B cell (primary cell): ENCODE measurements at regions of chr3 and their contacts with region 1.

Region 1: DNA sequence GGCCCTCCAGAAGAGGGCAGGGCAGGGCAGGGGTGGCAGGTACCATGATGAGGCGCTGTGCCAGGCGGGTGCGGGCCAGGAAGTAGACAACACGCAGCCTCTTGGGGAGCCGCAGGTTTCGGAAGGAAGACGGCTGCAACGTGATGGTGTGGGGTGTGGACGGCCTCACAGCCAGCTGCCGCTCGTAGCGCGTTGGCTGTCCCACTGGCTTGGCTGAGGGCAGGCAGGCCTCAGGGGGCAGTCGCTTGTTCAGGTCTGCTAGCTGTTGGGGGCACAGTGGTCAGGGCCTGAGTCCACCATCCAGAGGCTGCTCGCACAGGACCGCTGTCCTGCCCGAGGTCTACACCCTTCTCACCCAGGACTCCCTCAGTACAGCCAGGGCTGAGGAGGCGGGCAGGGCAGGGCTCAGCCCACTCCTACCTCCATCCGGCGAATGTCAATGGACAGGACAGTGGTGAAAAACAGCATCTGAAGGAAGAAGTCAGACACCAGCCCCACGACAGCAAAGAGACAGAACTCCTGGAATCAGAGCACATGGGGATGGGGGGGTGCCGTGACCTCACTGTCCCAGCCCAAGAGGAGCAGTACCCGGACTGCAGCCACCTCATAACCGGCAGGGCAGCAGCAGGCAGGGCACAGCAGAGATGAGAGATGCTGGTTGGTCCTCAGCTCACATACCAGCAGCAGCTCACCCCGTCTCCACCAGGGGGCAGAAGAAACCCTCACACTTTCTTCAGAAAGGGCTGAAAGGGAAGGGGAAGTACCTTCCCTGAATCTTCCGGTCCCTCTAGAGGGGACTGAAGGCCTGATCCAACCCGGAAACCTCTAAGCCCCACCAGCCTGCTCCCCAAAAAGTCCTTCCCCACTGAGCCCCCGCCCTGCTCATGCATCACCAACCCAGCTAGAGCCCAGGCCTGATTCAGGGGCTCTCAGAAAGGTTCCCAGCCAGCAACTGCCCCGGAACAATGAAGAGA is 40.0 kb downstream of the PTPN23 start:
- DNase-seq: peak; percentile 92
- ATAC-seq: peak; percentile 98
- H3K4me3 ChIP-seq: peak overlapping the region in 2 of 5 experiments; percentile 8 to 9
- H3K4me3 Mint-ChIP-seq: peak overlapping the region; percentile 76
- H3K27ac ChIP-seq: peak overlapping the region; percentile 77 to 87
- H3K27ac Mint-ChIP-seq: peak overlapping the region; percentile 99
- H3K4me1 ChIP-seq: peaks cover 11 to 12% of the 10 kb centered on the region in 2 donors
- H3K4me1 Mint-ChIP-seq: peaks cover 14% of the 10 kb centered on the region
- H3K27me3 ChIP-seq: no peaks in the 10 kb centered on the region
- H3K27me3 Mint-ChIP-seq: no peaks in the 10 kb centered on the region
- CTCF ChIP-seq: peak; percentile 89

Region 2: GRCh38 chr3:46742992-46743585 is 677.7 kb before region 1 on chr3:
- CTCF ChIA-PET with region 1: no interaction called
- POLR2A ChIA-PET with region 1: no interaction called
- intact Hi-C with region 1: no loop called
- DNase-seq: no peak
- ATAC-seq: no peak
- H3K4me3 ChIP-seq: no peak overlapping the region
- H3K4me3 Mint-ChIP-seq: no peak overlapping the region
- H3K27ac ChIP-seq: no peak overlapping the region
- H3K27ac Mint-ChIP-seq: no peak overlapping the region
- H3K4me1 ChIP-seq: no peaks in the 10 kb centered on the region
- H3K4me1 Mint-ChIP-seq: no peaks in the 10 kb centered on the region
- H3K27me3 ChIP-seq: no peaks in the 10 kb centered on the region
- H3K27me3 Mint-ChIP-seq: peaks cover 3% of the 10 kb centered on the region
- CTCF ChIP-seq: no peak

Region 3: GRCh38 chr3:47296562-47297302 is 124.1 kb before region 1 on chr3:
- CTCF ChIA-PET with region 1: no interaction called
- POLR2A ChIA-PET with region 1: no interaction called
- intact Hi-C with region 1: no loop called
- DNase-seq: no peak
- ATAC-seq: no peak
- H3K4me3 ChIP-seq: peak overlapping the region in 1 of 5 experiments; percentile 15
- H3K4me3 Mint-ChIP-seq: peak overlapping the region; percentile 40
- H3K27ac ChIP-seq: peak overlapping the region; percentile 1 to 43
- H3K27ac Mint-ChIP-seq: peak overlapping the region; percentile 80
- H3K4me1 ChIP-seq: peaks cover 23 to 33% of the 10 kb centered on the region in 2 donors
- H3K4me1 Mint-ChIP-seq: peaks cover 74% of the 10 kb centered on the region
- H3K27me3 ChIP-seq: no peaks in the 10 kb centered on the region
- H3K27me3 Mint-ChIP-seq: no peaks in the 10 kb centered on the region
- CTCF ChIP-seq: no peak

Region 4: GRCh38 chr3:47646362-47646761 is 225.6 kb after region 1 on chr3:
- CTCF ChIA-PET with region 1: no interaction called
- POLR2A ChIA-PET with region 1: no interaction called
- intact Hi-C with region 1: no loop called
- DNase-seq: no peak
- ATAC-seq: no peak
- H3K4me3 ChIP-seq: no peak overlapping the region
- H3K4me3 Mint-ChIP-seq: no peak overlapping the region
- H3K27ac ChIP-seq: no peak overlapping the region
- H3K27ac Mint-ChIP-seq: no peak overlapping the region
- H3K4me1 ChIP-seq: no peaks in the 10 kb centered on the region
- H3K4me1 Mint-ChIP-seq: no peaks in the 10 kb centered on the region
- H3K27me3 ChIP-seq: no peaks in the 10 kb centered on the region
- H3K27me3 Mint-ChIP-seq: no peaks in the 10 kb centered on the region
- CTCF ChIP-seq: no peak

Region 5: GRCh38 chr3:47791193-47791855 is 370.5 kb after region 1 on chr3:
- CTCF ChIA-PET with region 1: no interaction called
- POLR2A ChIA-PET with region 1: interaction called, 3 read pairs
- intact Hi-C with region 1: loop called (anchors 1 kb)
- DNase-seq: no peak
- ATAC-seq: no peak
- H3K4me3 ChIP-seq: no peak overlapping the region
- H3K4me3 Mint-ChIP-seq: no peak overlapping the region
- H3K27ac ChIP-seq: no peak overlapping the region
- H3K27ac Mint-ChIP-seq: peak overlapping the region; percentile 4
- H3K4me1 ChIP-seq: no peaks in the 10 kb centered on the region
- H3K4me1 Mint-ChIP-seq: peaks cover 1% of the 10 kb centered on the region
- H3K27me3 ChIP-seq: no peaks in the 10 kb centered on the region
- H3K27me3 Mint-ChIP-seq: no peaks in the 10 kb centered on the region
- CTCF ChIP-seq: no peak